ENCODE measurements at regions of chr3 and their contacts with region 1.

Region 1: GRCh38 chr3:101635954-101636798 is 40.8 kb downstream of the ZBTB11 start:
- DNase-seq: peak; percentile 90
- ATAC-seq: peak; percentile 99
- H3K4me3 Mint-ChIP-seq: no peak overlapping the region
- H3K27ac Mint-ChIP-seq: peak overlapping the region; percentile 33
- H3K4me1 Mint-ChIP-seq: no peaks in the 10 kb centered on the region
- H3K27me3 Mint-ChIP-seq: no peaks in the 10 kb centered on the region

Region 2: DNA sequence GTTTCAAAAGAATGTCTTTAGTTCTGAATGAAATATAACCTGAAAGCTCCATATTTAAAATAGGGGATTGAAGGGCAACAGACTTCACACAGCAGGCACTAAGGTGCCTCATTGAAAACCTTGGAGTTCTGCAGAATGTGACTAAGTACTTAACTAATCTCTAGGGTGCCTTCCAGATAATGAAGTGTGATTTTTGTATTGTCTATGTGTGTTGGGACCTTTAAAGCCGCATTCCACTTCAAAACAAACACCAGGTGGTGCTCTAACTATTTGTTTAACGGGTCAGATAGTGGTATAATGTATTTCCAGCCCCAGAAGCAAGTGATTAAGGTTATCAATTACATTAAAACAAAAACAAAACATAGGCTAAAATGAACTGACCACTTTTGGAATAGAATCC is 898.8 kb before region 1 on chr3:
- CTCF ChIA-PET with region 1: no interaction called
- POLR2A ChIA-PET with region 1: no interaction called
- intact Hi-C with region 1: loop called in 1 of 2 experiments (anchors 10 kb)
- DNase-seq: no peak
- ATAC-seq: no peak
- H3K4me3 Mint-ChIP-seq: no peak overlapping the region
- H3K27ac Mint-ChIP-seq: no peak overlapping the region
- H3K4me1 Mint-ChIP-seq: peaks cover 8% of the 10 kb centered on the region
- H3K27me3 Mint-ChIP-seq: no peaks in the 10 kb centered on the region

Region 3: GRCh38 chr3:101069901-101070798 is 566.0 kb before region 1 on chr3:
- CTCF ChIA-PET with region 1: interaction called, 3 read pairs
- POLR2A ChIA-PET with region 1: no interaction called
- intact Hi-C with region 1: loop called (anchors 1 to 2 kb)
- DNase-seq: peak; percentile 88
- ATAC-seq: peak; percentile 85
- H3K4me3 Mint-ChIP-seq: no peak overlapping the region
- H3K27ac Mint-ChIP-seq: no peak overlapping the region
- H3K4me1 Mint-ChIP-seq: peaks cover 4% of the 10 kb centered on the region
- H3K27me3 Mint-ChIP-seq: peaks cover 19% of the 10 kb centered on the region

Region 4: DNA sequence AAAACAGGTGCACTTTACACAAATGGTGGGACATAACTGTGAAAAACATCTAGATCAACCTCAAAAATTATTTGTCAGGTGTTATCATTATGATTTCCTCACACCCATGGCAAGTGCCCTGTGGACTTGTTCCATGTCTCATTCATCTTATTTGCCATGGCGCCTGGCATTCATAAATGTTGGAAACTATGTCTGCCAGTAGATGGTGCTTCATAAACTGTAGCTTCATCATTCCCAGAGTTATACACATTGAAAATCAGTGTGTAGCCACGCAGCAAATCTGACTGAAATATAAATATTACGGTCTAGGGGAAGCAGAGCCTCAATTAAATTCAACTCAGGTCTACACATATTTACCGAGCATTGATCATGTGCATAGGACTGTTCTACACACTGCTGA is 406.5 kb before region 1 on chr3:
- CTCF ChIA-PET with region 1: no interaction called
- POLR2A ChIA-PET with region 1: no interaction called
- intact Hi-C with region 1: loop called in 1 of 2 experiments (anchors 10 kb)
- DNase-seq: no peak
- ATAC-seq: no peak
- H3K4me3 Mint-ChIP-seq: no peak overlapping the region
- H3K27ac Mint-ChIP-seq: no peak overlapping the region
- H3K4me1 Mint-ChIP-seq: no peaks in the 10 kb centered on the region
- H3K27me3 Mint-ChIP-seq: no peaks in the 10 kb centered on the region

Region 5: GRCh38 chr3:101303089-101303731 is 333.0 kb before region 1 on chr3:
- CTCF ChIA-PET with region 1: no interaction called
- POLR2A ChIA-PET with region 1: no interaction called
- intact Hi-C with region 1: no loop called
- DNase-seq: no peak
- ATAC-seq: no peak
- H3K4me3 Mint-ChIP-seq: no peak overlapping the region
- H3K27ac Mint-ChIP-seq: no peak overlapping the region
- H3K4me1 Mint-ChIP-seq: no peaks in the 10 kb centered on the region
- H3K27me3 Mint-ChIP-seq: no peaks in the 10 kb centered on the region

Region 6: GRCh38 chr3:103127737-103128136 is 1491.6 kb after region 1 on chr3:
- CTCF ChIA-PET with region 1: no interaction called
- POLR2A ChIA-PET with region 1: no interaction called
- intact Hi-C with region 1: no loop called
- DNase-seq: no peak
- ATAC-seq: peak; percentile 36
- H3K4me3 Mint-ChIP-seq: no peak overlapping the region
- H3K27ac Mint-ChIP-seq: no peak overlapping the region
- H3K4me1 Mint-ChIP-seq: no peaks in the 10 kb centered on the region
- H3K27me3 Mint-ChIP-seq: no peaks in the 10 kb centered on the region

Measured in activated CD4-positive, alpha-beta T cell treated with anti-CD3 and anti-CD28 coated beads for 36 hours (primary cell).